ENCODE measurements at regions of chr5 and their contacts with region 1.

Region 1: GRCh38 chr5:96752341-96753016 is 55.3 kb downstream of the ERAP1 start:
- DNase-seq: peak; percentile 38
- CTCF ChIP-seq: peak; percentile 48

Region 2: GRCh38 chr5:96729156-96729555 is 23.3 kb before region 1 on chr5:
- CTCF ChIA-PET with region 1: interaction called, 16 read pairs
- POLR2A ChIA-PET with region 1: no interaction called
- DNase-seq: no peak
- CTCF ChIP-seq: peak; percentile 27

Region 3: GRCh38 chr5:96763026-96763425 is 10.5 kb after region 1 on chr5:
- CTCF ChIA-PET with region 1: interaction called, 35 read pairs
- POLR2A ChIA-PET with region 1: no interaction called
- DNase-seq: no peak
- CTCF ChIP-seq: no peak

Region 4: DNA sequence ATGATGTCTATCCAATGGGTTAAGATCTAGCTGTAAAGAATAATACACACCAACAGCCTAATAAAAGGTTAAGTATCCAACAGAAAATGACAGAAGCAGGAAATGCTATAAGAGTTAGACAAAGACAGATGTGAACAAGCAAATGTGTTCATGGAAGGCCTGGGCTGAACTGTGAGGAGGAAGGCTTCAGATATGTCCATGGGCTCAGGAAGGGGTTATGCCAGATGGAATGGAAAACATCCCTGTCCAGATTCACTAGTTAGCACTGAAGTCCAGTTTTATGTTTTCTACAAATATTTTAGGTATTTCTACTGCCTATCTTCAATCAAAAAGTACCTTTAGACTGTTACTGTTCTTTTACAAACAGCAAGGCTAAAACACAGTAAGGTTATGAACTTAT is 28.1 kb after region 1 on chr5:
- CTCF ChIA-PET with region 1: interaction called, 11 read pairs
- POLR2A ChIA-PET with region 1: no interaction called
- DNase-seq: no peak
- CTCF ChIP-seq: no peak

Region 5: GRCh38 chr5:96861076-96861475 is 108.6 kb after region 1 on chr5:
- CTCF ChIA-PET with region 1: no interaction called
- POLR2A ChIA-PET with region 1: no interaction called
- DNase-seq: no peak
- CTCF ChIP-seq: no peak

Region 6: DNA sequence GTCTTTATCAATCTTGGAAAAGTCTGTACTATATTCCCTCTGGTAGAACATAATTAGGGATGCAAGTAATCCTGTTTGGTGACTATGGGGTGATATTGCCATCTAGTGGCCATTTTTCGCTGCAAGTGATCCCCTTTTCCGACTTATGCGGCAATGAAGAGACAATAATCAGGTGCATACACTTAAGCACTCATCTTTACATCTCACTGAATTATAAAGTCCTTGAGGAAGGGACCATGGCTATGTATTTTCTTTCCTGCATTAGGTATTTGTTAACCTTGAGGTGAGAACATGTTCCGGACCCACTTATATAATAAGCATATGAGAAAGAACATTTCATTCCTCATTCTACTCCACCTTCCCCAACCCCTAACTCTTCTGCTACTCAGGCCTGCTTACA is 409.6 kb after region 1 on chr5:
- CTCF ChIA-PET with region 1: interaction called, 110 read pairs
- POLR2A ChIA-PET with region 1: no interaction called
- DNase-seq: peak; percentile 15
- CTCF ChIP-seq: peak; percentile 80